Left lung (tissue), 14 donors: ENCODE measurements at regions of chr6 and their contacts with region 1.

Region 1: GRCh38 chr6:43143235-43144124 is 27.6 kb upstream of the SRF start:
- DNase-seq: peak; percentile 80 to 96 (median 90)
- ATAC-seq: peak; percentile 98
- H3K4me3 ChIP-seq: no peak overlapping the region
- H3K27ac ChIP-seq: no peak overlapping the region
- H3K4me1 ChIP-seq: peaks cover 4 to 13% of the 10 kb centered on the region in 2 donors
- H3K27me3 ChIP-seq: no peaks in the 10 kb centered on the region
- CTCF ChIP-seq: peak; percentile 86 to 87

Region 2: GRCh38 chr6:42808492-42809483 is 334.7 kb before region 1 on chr6:
- intact Hi-C with region 1: no loop called
- DNase-seq: no peak
- ATAC-seq: no peak
- H3K4me3 ChIP-seq: no peak overlapping the region
- H3K27ac ChIP-seq: no peak overlapping the region
- H3K4me1 ChIP-seq: peaks cover 0 to 6% of the 10 kb centered on the region in 2 donors
- H3K27me3 ChIP-seq: no peaks in the 10 kb centered on the region
- CTCF ChIP-seq: no peak

Region 3: DNA sequence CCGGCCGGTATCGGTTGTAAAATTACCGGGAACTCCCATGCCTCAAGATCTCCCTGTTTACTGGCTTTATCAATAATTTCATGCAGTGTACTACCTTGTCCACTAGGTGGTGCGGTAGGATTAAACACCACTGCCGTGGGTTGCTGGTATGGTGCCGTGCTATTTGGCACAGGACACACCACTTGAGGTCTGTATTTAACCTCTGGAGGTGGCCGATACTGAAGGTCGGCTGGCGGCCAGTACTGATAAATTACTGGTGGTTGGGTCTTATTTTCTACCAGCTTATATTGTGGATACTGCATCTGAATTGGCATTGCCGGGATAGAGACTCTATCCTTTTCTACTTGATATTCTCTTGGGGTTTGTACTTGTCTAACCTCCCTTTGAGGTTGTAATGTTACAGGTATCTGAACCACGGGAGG is 241.9 kb before region 1 on chr6:
- intact Hi-C with region 1: loop called in 1 of 2 experiments (anchors 10 kb)
- DNase-seq: peak in 3 of 4 donors; percentile 77 to 87 (median 78)
- ATAC-seq: peak; percentile 100
- H3K4me3 ChIP-seq: no peak overlapping the region
- H3K27ac ChIP-seq: no peak overlapping the region
- H3K4me1 ChIP-seq: peaks cover 8% of the 10 kb centered on the region in 2 donors
- H3K27me3 ChIP-seq: no peaks in the 10 kb centered on the region
- CTCF ChIP-seq: peak; percentile 80 to 81

Region 4: GRCh38 chr6:43444036-43444435 is 300.6 kb after region 1 on chr6:
- intact Hi-C with region 1: no loop called
- DNase-seq: no peak
- ATAC-seq: no peak
- H3K4me3 ChIP-seq: no peak overlapping the region
- H3K27ac ChIP-seq: no peak overlapping the region
- H3K4me1 ChIP-seq: no peaks in the 10 kb centered on the region
- H3K27me3 ChIP-seq: no peaks in the 10 kb centered on the region
- CTCF ChIP-seq: no peak